ENCODE measurements at regions of chr5 and their contacts with region 1.

Region 1: GRCh38 chr5:80960531-80961375 is 590 bp downstream of the RASGRF2 start:
- DNase-seq: peak; percentile 29 to 40
- ATAC-seq: peak; percentile 74 to 91 (median 83)
- H3K4me3 ChIP-seq: peak overlapping the region; percentile 54 to 77 (median 65)
- H3K27ac ChIP-seq: peak overlapping the region; percentile 83 to 92 (median 87)
- H3K4me1 ChIP-seq: peaks cover 0 to 34% (median 4%) of the 10 kb centered on the region in 9 donors
- H3K27me3 ChIP-seq: peaks cover 0 to 88% (median 41%) of the 10 kb centered on the region in 7 donors
- CTCF ChIP-seq: peak in 8 of 9 donors; percentile 11 to 54 (median 30)

Region 2: GRCh38 chr5:81068063-81068462 is 107.3 kb after region 1 on chr5:
- intact Hi-C with region 1: loop called in 5 of 10 experiments (anchors 5 kb)
- DNase-seq: peak in 1 of 2 donors; percentile 49
- ATAC-seq: peak in 7 of 8 donors; percentile 59 to 93 (median 87)
- H3K4me3 ChIP-seq: no peak overlapping the region
- H3K27ac ChIP-seq: peak overlapping the region in 9 of 10 donors; percentile 16 to 86 (median 71)
- H3K4me1 ChIP-seq: peaks cover 0 to 25% (median 0%) of the 10 kb centered on the region in 9 donors
- H3K27me3 ChIP-seq: no peaks in the 10 kb centered on the region
- CTCF ChIP-seq: no peak

Region 3: GRCh38 chr5:81086881-81087281 is 126.1 kb after region 1 on chr5:
- intact Hi-C with region 1: loop called in 2 of 10 experiments (anchors 5 kb)
- DNase-seq: no peak
- ATAC-seq: no peak
- H3K4me3 ChIP-seq: peak overlapping the region in 5 of 10 donors; percentile 6 to 26 (median 17)
- H3K27ac ChIP-seq: no peak overlapping the region
- H3K4me1 ChIP-seq: no peaks in the 10 kb centered on the region
- H3K27me3 ChIP-seq: no peaks in the 10 kb centered on the region
- CTCF ChIP-seq: no peak

Region 4: GRCh38 chr5:81115261-81115660 is 154.5 kb after region 1 on chr5:
- intact Hi-C with region 1: loop called in 1 of 10 experiments (anchors 10 kb)
- DNase-seq: no peak
- ATAC-seq: no peak
- H3K4me3 ChIP-seq: no peak overlapping the region
- H3K27ac ChIP-seq: no peak overlapping the region
- H3K4me1 ChIP-seq: no peaks in the 10 kb centered on the region
- H3K27me3 ChIP-seq: no peaks in the 10 kb centered on the region
- CTCF ChIP-seq: no peak

Region 5: GRCh38 chr5:81194633-81195333 is 234.0 kb after region 1 on chr5:
- intact Hi-C with region 1: loop called in 2 of 10 experiments (anchors 10 kb)
- DNase-seq: peak; percentile 75 to 86
- ATAC-seq: peak; percentile 94 to 96 (median 95)
- H3K4me3 ChIP-seq: peak overlapping the region in 2 of 10 donors; percentile 1
- H3K27ac ChIP-seq: no peak overlapping the region
- H3K4me1 ChIP-seq: peaks cover 0 to 14% (median 10%) of the 10 kb centered on the region in 9 donors
- H3K27me3 ChIP-seq: no peaks in the 10 kb centered on the region
- CTCF ChIP-seq: peak; percentile 80 to 97 (median 94)